ENCODE measurements at regions of chr15 and their contacts with region 1.

Region 1: GRCh38 chr15:88331280-88331679 is 74.7 kb upstream of the NTRK3 start:
- DNase-seq: peak; percentile 72
- ATAC-seq: peak; percentile 98
- H3K4me3 ChIP-seq: no peak overlapping the region
- H3K27ac ChIP-seq: no peak overlapping the region
- H3K4me1 ChIP-seq: no peaks in the 10 kb centered on the region
- H3K27me3 ChIP-seq: peaks cover 6% of the 10 kb centered on the region
- CTCF ChIP-seq: peak; percentile 52 to 93 (median 89); a peak in 5 of 6 replicates
- POLR2A ChIP-seq: no peak
- RAD21 ChIP-seq: peak; percentile 53

Region 2: GRCh38 chr15:88299497-88299896 is 31.8 kb before region 1 on chr15:
- CTCF ChIA-PET with region 1: interaction called, 4 read pairs
- POLR2A ChIA-PET with region 1: no interaction called
- RAD21 ChIA-PET with region 1: no interaction called
- intact Hi-C with region 1: loop called (anchors 2 kb)
- DNase-seq: no peak
- ATAC-seq: no peak
- H3K4me3 ChIP-seq: no peak overlapping the region
- H3K27ac ChIP-seq: no peak overlapping the region
- H3K4me1 ChIP-seq: no peaks in the 10 kb centered on the region
- H3K27me3 ChIP-seq: peaks cover 51% of the 10 kb centered on the region
- CTCF ChIP-seq: no peak
- POLR2A ChIP-seq: no peak
- RAD21 ChIP-seq: no peak

Region 3: GRCh38 chr15:88321269-88321668 is 10.0 kb before region 1 on chr15:
- CTCF ChIA-PET with region 1: interaction called, 10 read pairs
- POLR2A ChIA-PET with region 1: no interaction called
- RAD21 ChIA-PET with region 1: no interaction called
- intact Hi-C with region 1: no loop called
- DNase-seq: no peak
- ATAC-seq: no peak
- H3K4me3 ChIP-seq: no peak overlapping the region
- H3K27ac ChIP-seq: no peak overlapping the region
- H3K4me1 ChIP-seq: no peaks in the 10 kb centered on the region
- H3K27me3 ChIP-seq: peaks cover 34% of the 10 kb centered on the region
- CTCF ChIP-seq: no peak
- POLR2A ChIP-seq: no peak
- RAD21 ChIP-seq: no peak

Measured in HCT116 (cell line).